Heart right ventricle (tissue), 16 donors: ENCODE measurements at regions of chr12 and their contacts with region 1.

Region 1: DNA sequence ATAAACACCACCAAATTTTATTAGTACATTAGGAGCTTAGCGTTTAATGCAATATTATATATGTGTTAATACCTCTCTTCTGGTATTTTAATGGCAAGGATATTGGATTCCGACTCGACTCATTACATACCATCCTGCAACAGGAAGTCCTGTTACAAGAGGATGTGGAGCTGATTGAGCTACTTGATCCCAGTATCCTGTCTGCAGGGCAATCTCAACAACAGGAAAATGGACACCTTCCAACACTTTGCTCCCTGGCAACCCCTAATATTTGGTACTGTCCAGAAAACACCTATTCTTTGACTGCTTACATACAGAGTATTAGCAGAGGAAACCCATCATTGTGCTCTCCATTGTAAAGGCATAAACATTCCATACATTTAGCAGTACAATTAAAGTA is 45.2 kb downstream of the VEZT start:
- DNase-seq: peak in 1 of 2 donors; percentile 50
- ATAC-seq: peak; percentile 51 to 91 (median 83)
- H3K4me3 ChIP-seq: no peak overlapping the region
- H3K27ac ChIP-seq: peak overlapping the region in 6 of 10 donors; percentile 16 to 50 (median 26)
- H3K4me1 ChIP-seq: peaks cover 0 to 48% (median 24%) of the 10 kb centered on the region in 9 donors
- H3K27me3 ChIP-seq: no peaks in the 10 kb centered on the region
- CTCF ChIP-seq: no peak

Region 2: DNA sequence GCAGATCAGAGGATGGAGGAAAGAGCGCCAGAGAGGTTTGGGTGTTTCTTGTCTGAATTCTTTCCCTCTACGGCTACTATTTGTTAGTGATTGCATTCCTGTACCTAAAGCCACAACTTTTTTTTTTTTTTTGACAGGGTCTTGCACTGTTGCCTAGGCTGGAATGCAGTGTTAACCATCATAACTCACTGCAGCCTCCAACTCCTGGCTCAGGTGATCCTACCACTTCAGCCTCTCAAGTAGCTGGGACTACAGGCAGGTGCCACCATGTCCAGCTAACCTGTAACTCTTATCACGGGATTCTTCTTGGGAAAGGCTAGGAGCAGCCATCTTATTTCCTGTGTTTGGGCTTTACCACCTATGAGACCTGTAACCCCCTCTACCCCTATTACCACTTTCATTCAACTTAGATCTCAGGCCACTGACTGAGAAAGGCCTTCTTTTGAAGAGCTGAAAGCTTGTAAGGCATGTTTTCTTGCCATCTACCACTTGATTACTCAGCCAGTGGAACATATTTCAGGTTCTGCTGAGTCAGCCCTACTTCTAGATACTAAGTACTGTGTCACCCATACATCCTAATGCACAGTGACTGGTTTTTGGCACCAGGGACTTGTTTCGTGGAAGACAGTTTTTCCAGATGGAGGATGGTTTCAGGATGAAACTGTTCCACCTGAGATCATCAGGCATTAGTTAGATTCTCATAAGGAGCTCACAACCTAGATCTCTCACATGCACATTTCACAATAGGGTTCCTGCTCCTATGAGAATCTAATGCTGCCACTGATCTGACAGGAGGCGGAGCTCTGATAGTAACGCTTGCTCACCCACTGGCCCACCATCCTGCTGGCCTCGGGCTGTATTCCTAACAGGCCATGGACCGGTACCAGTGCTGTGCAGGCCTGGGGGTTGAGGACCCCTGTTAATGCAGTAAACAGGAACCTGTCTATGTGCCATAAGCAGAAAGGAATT is 38.3 kb before region 1 on chr12:
- intact Hi-C with region 1: loop called in 2 of 10 experiments (anchors 5 kb)
- DNase-seq: no peak
- ATAC-seq: peak in 3 of 8 donors; percentile 18 to 25 (median 24)
- H3K4me3 ChIP-seq: no peak overlapping the region
- H3K27ac ChIP-seq: no peak overlapping the region
- H3K4me1 ChIP-seq: peaks cover 0 to 69% (median 38%) of the 10 kb centered on the region in 9 donors
- H3K27me3 ChIP-seq: no peaks in the 10 kb centered on the region
- CTCF ChIP-seq: no peak

Region 3: GRCh38 chr12:95380997-95381786 is 118.4 kb after region 1 on chr12:
- intact Hi-C with region 1: no loop called
- DNase-seq: no peak
- ATAC-seq: no peak
- H3K4me3 ChIP-seq: no peak overlapping the region
- H3K27ac ChIP-seq: no peak overlapping the region
- H3K4me1 ChIP-seq: peaks cover 3 to 26% (median 13%) of the 10 kb centered on the region in 9 donors
- H3K27me3 ChIP-seq: no peaks in the 10 kb centered on the region
- CTCF ChIP-seq: no peak